Activated CD4-positive, alpha-beta T cell treated with anti-CD3 and anti-CD28 coated beads, Interleukin-2, amount 10 ng/mL, durations not matched to agents 24 days and 14 days (primary cell): ENCODE measurements at regions of chr3 and their contacts with region 1.

Region 1: GRCh38 chr3:121834696-121835464 is at the starts of genes EAF2 and IQCB1:
- DNase-seq: peak; percentile 99
- H3K4me3 Mint-ChIP-seq: peak within 1 kb of the TSS; percentile 90
- H3K27ac Mint-ChIP-seq: peak within 1 kb of the TSS; percentile 96
- H3K4me1 Mint-ChIP-seq: peaks cover 41% of the 10 kb centered on the region
- H3K27me3 Mint-ChIP-seq: no peaks in the 10 kb centered on the region
- total RNA-seq, gene EAF2: 13.7 and 14.5 TPM in 2 replicates
- total RNA-seq, gene IQCB1: 49.1 and 51.6 TPM in 2 replicates

Region 2: GRCh38 chr3:121660356-121661171 is 174.3 kb before region 1 on chr3 and contains the start of gene HCLS1:
- intact Hi-C with region 1: loop called (anchors 1 kb)
- DNase-seq: peak; percentile 92
- H3K4me3 Mint-ChIP-seq: peak within 1 kb of the TSS; percentile 91
- H3K27ac Mint-ChIP-seq: peak within 1 kb of the TSS; percentile 97
- H3K4me1 Mint-ChIP-seq: peaks cover 46% of the 10 kb centered on the region
- H3K27me3 Mint-ChIP-seq: no peaks in the 10 kb centered on the region
- total RNA-seq, gene HCLS1: 210 and 216 TPM in 2 replicates

Region 3: GRCh38 chr3:121749276-121750086 is 85.4 kb before region 1 on chr3 and contains the start of gene GOLGB1:
- intact Hi-C with region 1: loop called (anchors 1 kb)
- DNase-seq: peak; percentile 97
- H3K4me3 Mint-ChIP-seq: no peak within 1 kb of the TSS
- H3K27ac Mint-ChIP-seq: no peak within 1 kb of the TSS
- H3K4me1 Mint-ChIP-seq: peaks cover 9% of the 10 kb centered on the region
- H3K27me3 Mint-ChIP-seq: peaks cover 20% of the 10 kb centered on the region
- total RNA-seq, gene GOLGB1: 21.0 and 22.2 TPM in 2 replicates

Region 4: GRCh38 chr3:121942116-121942788 is 107.4 kb after region 1 on chr3:
- intact Hi-C with region 1: no loop called
- DNase-seq: no peak
- H3K4me3 Mint-ChIP-seq: no peak overlapping the region
- H3K27ac Mint-ChIP-seq: no peak overlapping the region
- H3K4me1 Mint-ChIP-seq: no peaks in the 10 kb centered on the region
- H3K27me3 Mint-ChIP-seq: no peaks in the 10 kb centered on the region

Region 5: DNA sequence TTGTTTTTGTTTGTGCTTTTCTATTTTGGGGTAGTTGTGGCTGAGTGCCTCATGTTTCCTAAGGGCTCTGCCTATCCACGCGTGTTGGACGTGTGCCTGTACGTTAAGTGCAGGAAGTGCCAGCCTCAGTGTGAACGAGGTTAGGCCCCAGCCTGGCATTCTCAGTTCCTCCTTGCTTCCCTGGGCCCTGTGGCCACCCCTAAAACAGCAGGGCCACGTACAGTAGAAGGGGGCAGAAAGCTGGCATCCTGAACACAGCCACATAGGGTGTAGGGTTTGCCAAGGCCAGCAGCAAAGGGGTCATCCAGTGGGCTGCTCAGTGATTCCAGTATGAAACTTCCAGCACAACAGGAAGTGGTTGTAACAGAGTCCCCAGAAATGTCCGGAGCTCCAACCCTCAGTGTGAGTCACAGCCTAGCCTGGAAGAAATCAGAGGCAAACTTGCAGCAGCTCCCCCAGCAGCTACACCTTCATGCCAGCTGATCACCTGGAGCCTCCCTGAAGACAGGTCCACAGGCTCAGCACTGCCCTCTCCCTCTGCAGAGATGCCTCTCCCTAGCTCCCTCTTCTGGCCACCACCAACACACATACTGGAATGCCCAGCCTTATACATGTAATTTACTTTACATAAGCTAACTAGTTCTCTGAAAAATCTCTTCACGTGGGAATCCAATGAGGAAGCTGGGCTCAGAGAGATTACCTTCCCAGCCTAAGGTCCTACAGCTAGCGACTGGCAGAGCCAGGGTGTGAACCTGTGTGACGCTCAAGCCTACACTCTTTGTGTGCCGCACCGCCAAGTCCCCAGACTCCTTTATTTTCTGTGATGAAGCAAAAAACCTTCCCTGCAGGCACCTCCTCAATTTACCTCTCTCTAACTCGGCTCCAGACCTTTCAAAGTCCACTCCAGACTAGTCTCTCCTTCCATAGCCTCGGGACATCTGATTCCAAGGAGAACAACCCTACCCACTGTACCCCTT is 160.6 kb after region 1 on chr3:
- intact Hi-C with region 1: no loop called
- DNase-seq: peak; percentile 70
- H3K4me3 Mint-ChIP-seq: no peak overlapping the region
- H3K27ac Mint-ChIP-seq: peak overlapping the region; percentile 68
- H3K4me1 Mint-ChIP-seq: peaks cover 26% of the 10 kb centered on the region
- H3K27me3 Mint-ChIP-seq: no peaks in the 10 kb centered on the region

Region 6: GRCh38 chr3:122258757-122259371 is 424.0 kb after region 1 on chr3:
- intact Hi-C with region 1: loop called (anchors 10 kb)
- DNase-seq: peak; percentile 85
- H3K4me3 Mint-ChIP-seq: no peak overlapping the region
- H3K27ac Mint-ChIP-seq: no peak overlapping the region
- H3K4me1 Mint-ChIP-seq: peaks cover 16% of the 10 kb centered on the region
- H3K27me3 Mint-ChIP-seq: peaks cover 12% of the 10 kb centered on the region